Mucosa of descending colon (tissue), 3 donors: ENCODE measurements at regions of chr2 and their contacts with region 1.

Region 1: GRCh38 chr2:20635675-20636584 is 15.0 kb downstream of the HS1BP3 start:
- DNase-seq: peak; percentile 85 to 92 (median 90)
- ATAC-seq: peak; percentile 73
- H3K4me3 ChIP-seq: no peak overlapping the region
- H3K4me1 ChIP-seq: peaks cover 19% of the 10 kb centered on the region
- CTCF ChIP-seq: peak; percentile 84

Region 2: DNA sequence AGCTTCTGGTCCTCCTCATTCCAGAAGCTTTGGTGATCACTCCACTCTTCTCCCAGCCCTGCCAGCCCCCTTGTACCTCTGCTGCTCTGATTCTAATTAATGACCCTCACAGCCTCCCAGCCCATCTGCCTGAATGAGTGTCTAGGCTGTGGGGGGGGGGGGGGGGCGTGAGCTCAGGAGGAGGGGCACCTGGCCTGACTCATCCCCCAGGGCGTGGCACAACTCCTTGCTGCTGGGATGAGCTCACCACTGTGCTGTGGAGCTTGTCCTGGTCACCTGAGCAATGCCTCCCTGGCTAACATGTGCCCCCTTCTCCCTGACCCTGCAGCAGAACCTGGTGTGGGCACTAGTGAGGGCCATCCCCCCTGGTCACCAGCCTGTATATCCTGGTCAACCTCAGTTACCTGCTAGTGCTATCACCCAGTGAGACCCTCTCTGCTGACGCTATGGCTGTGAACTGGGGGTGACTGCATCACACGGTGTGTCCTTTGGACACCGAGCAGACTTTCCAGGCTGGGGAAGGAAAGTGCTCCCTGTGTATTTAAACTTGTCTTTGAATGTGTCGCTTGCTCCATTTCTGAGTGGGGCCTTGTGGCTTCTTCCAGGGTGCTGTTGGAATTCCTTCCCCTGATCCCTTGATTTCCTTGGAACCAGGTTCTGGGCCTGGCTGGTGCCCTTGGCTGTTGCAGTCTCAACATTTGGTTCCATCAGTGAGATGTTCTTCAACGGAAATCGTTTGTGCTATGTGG is 243.8 kb before region 1 on chr2:
- intact Hi-C with region 1: loop called in 1 of 2 experiments (anchors 5 kb)
- DNase-seq: no peak
- ATAC-seq: peak; percentile 48
- H3K4me3 ChIP-seq: no peak overlapping the region
- H3K4me1 ChIP-seq: no peaks in the 10 kb centered on the region
- CTCF ChIP-seq: no peak

Region 3: GRCh38 chr2:20446917-20447436 is 189.0 kb before region 1 on chr2 and contains the start of gene RHOB:
- intact Hi-C with region 1: loop called (anchors 5 to 10 kb)
- DNase-seq: peak; percentile 97 to 98 (median 97)
- ATAC-seq: peak; percentile 91
- H3K4me3 ChIP-seq: peak within 1 kb of the TSS; percentile 97
- H3K4me1 ChIP-seq: peaks cover 20% of the 10 kb centered on the region
- CTCF ChIP-seq: peak; percentile 18
- total RNA-seq, gene RHOB: 75.5 to 616 (median 104) TPM